ENCODE measurements at regions of chr11 and their contacts with region 1.

Region 1: DNA sequence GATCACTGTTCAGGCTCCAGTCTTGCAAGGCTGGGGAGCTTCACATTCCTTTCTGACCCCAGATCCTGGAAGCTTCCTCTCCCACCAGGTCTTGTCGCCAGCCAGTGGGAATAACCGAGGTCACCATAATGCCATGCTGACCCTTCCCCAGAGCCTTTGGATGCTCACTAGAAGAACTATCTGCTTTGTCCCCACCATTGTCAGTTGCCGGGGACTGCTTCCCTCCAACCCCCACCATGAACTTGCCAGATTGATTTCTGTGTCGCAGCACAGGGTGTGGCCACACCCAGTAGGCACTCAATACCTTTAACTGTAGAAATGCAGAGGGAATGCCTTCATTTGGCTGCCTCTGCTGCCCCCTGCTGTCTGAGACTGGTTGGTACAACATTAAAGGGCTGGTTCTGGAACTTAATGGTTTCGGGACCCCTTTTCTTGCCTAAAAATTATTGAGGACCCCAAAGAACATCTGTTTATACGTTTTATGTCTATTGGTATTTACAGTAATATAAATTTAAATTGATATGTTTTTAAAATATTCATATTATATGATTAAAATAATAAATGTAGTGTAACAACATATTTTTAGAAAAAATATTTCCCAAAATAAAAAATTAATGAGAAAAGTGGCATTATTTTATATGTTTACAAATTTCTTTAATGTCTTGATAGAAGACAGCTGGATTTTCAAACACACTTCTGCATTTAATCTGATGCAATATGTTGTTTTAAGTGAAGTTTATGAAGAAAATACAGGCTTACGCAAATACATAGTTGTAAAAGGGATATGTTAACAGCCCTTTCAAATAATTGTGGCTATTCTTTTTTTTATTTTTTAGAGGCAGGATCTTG is 6.7 kb upstream of the GDPD5 start:
- DNase-seq: peak; percentile 56 to 79 (median 70)
- ATAC-seq: peak; percentile 81
- H3K4me3 ChIP-seq: no peak overlapping the region
- H3K27ac ChIP-seq: no peak overlapping the region
- H3K4me1 ChIP-seq: peaks cover 3% of the 10 kb centered on the region
- H3K27me3 ChIP-seq: no peaks in the 10 kb centered on the region
- CTCF ChIP-seq: peak; percentile 63 to 92 (median 88)
- POLR2A ChIP-seq: no peak

Region 2: DNA sequence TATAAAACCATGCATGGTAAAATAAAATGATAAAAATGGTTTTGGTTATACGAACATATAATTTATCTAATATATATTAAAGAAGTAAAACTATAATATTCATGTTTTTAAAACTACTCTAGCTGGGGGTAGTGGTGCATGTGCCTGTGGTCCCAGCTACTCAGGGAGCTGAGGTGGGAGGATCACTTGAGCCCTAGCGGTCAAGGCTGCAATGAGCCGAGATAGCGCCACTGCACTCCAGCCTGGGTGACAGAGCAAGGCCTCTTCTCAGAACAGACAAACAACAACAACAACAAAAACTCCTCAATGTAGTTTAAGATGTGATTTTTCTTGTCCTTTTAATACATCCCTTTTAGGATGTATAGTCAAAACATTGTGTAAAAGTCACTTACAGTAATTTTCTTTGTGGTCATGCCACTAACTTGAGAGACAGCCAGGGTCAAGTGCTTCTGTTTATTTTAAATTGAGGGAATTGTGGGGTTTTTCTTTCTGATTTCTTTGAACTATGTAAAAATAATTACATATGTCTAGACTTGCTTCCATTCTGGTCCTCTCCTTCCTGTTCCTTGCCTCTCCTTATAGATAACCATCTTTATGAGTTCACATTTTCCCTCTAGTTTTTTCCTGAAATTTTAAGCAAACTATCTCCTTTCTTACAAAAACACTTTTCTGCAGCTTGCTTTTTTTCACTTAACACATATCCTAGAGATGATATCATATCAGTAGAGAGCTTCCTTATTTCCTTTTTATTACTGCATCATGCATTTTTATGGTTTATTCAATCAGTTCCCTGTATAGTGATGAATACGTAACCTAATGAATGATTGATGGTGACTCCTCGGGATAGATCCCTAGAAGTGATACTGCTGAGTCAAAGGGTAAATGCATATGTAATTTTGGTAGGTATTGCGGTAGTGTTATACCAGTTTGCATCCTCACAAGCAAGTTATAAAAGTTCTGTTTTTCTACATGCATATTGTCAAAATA is 444.8 kb before region 1 on chr11:
- intact Hi-C with region 1: no loop called
- DNase-seq: no peak
- ATAC-seq: no peak
- H3K4me3 ChIP-seq: no peak overlapping the region
- H3K27ac ChIP-seq: no peak overlapping the region
- H3K4me1 ChIP-seq: no peaks in the 10 kb centered on the region
- H3K27me3 ChIP-seq: no peaks in the 10 kb centered on the region
- CTCF ChIP-seq: no peak
- POLR2A ChIP-seq: no peak

Region 3: DNA sequence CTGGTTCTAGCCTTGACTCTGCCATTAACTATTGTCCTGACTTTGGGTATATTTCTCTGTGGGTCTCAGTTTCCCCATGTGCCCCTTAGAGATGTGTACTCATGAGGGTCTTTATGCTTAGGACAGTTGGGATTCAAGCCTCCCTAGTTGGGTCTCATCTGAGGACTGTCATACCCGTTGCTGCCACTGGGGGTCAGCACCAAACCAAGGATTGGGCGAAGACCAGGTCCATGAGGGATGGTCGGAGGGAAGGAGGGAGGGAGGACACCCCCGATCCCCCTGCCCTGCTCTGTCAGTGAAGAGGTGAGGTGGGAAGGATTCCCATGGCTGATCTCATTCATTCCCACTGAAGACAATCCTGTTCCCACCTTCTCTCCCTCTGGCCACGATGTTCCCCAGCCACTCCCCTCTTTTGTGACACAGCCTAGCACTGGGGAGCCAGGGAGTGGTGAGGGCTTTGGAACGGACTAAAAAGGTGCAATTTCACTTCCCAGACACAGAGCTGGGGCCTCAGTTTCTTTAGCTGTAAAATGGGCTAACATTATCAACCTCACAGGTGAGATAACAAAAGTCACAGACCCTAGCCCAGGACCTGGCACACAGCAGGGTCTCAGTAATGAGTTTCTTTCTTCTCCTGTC is 87.0 kb before region 1 on chr11:
- intact Hi-C with region 1: loop called (anchors 2 kb)
- DNase-seq: peak; percentile 71 to 82 (median 76)
- ATAC-seq: peak; percentile 87
- H3K4me3 ChIP-seq: no peak overlapping the region
- H3K27ac ChIP-seq: no peak overlapping the region
- H3K4me1 ChIP-seq: no peaks in the 10 kb centered on the region
- H3K27me3 ChIP-seq: no peaks in the 10 kb centered on the region
- CTCF ChIP-seq: peak; percentile 83 to 97 (median 93)
- POLR2A ChIP-seq: no peak

Measured in body of pancreas (tissue), 4 donors.